ENCODE measurements at regions of chr3 and their contacts with region 1.

Region 1: GRCh38 chr3:151290673-151291072 is 12.3 kb upstream of the P2RY14 start:
- DNase-seq: peak in 1 of 2 experiments; percentile 46
- H3K4me3 ChIP-seq: no peak overlapping the region
- H3K27ac ChIP-seq: no peak overlapping the region
- H3K4me1 ChIP-seq: no peaks in the 10 kb centered on the region
- H3K27me3 ChIP-seq: no peaks in the 10 kb centered on the region
- CTCF ChIP-seq: peak; percentile 88

Region 2: GRCh38 chr3:151305101-151305750 is 14.6 kb after region 1 on chr3:
- CTCF ChIA-PET with region 1: no interaction called
- POLR2A ChIA-PET with region 1: no interaction called
- intact Hi-C with region 1: no loop called
- DNase-seq: peak; percentile 95 to 99
- H3K4me3 ChIP-seq: peak overlapping the region; percentile 51; the same call in 1 of the 2 replicates
- H3K27ac ChIP-seq: peak overlapping the region; percentile 96
- H3K4me1 ChIP-seq: peaks cover 77% of the 10 kb centered on the region
- H3K27me3 ChIP-seq: no peaks in the 10 kb centered on the region
- CTCF ChIP-seq: no peak

Region 3: DNA sequence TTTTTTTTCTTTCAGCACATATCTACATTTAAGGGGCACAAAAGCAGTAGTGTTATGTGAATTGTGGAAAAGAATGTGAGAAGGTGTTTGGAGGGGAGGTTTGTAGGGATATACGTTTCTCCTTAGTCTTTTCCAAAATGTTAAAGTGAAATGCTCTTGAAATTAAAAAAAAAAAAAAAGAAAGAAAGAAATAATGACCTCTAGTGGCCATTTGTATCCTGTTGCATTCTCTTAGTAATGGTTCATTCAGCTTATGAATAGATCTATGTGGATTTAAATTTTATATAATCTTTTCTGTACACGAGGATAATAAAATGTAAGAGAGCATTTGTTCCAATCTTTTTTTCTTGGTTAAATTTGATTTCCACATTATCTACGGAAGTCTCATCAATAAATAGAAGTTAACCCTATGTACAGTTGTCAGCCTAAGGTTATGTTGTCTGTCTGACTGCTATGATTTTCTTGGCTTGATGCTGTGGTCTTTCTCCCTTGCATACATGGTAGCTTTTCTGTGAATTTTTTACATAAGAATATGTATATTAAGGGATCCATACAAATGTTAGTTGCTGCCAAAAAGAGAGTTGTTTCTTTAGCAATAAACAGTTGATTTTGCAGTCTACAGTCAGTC is 37.0 kb after region 1 on chr3:
- CTCF ChIA-PET with region 1: interaction called, 10 read pairs
- POLR2A ChIA-PET with region 1: no interaction called
- intact Hi-C with region 1: loop called (anchors 2 kb)
- DNase-seq: no peak
- H3K4me3 ChIP-seq: no peak overlapping the region
- H3K27ac ChIP-seq: 0 out of 2 replicates have a peak overlapping the region, but pooled peaks have one; percentile 14
- H3K4me1 ChIP-seq: peaks cover 14% of the 10 kb centered on the region
- H3K27me3 ChIP-seq: no peaks in the 10 kb centered on the region
- CTCF ChIP-seq: peak; percentile 81

Region 4: DNA sequence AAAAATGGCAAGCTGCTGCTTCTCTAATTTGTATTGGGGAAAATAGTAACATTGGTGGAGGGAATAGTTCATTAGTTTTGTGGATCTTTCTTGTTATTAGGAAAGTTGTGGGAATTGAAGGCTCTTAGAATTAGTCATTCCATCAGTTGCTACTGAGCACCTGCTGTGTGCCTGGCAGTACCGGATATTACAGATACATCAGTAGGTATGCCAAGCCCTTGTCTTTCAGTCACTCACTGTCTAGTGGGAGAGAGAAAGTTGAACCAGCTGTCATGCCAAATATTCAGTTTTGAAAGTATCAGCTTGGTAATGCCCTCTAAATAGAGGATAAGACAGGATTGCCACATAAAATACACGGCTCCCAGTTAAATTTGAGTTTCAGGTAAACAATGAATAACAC is 137.7 kb after region 1 on chr3:
- CTCF ChIA-PET with region 1: no interaction called
- POLR2A ChIA-PET with region 1: no interaction called
- intact Hi-C with region 1: no loop called
- DNase-seq: no peak
- H3K4me3 ChIP-seq: no peak overlapping the region
- H3K27ac ChIP-seq: no peak overlapping the region
- H3K4me1 ChIP-seq: no peaks in the 10 kb centered on the region
- H3K27me3 ChIP-seq: no peaks in the 10 kb centered on the region
- CTCF ChIP-seq: no peak

Region 5: GRCh38 chr3:151439652-151440129 is 149.0 kb after region 1 on chr3:
- CTCF ChIA-PET with region 1: no interaction called
- POLR2A ChIA-PET with region 1: no interaction called
- intact Hi-C with region 1: loop called (anchors 2 kb)
- DNase-seq: peak; percentile 40 to 55
- H3K4me3 ChIP-seq: no peak overlapping the region
- H3K27ac ChIP-seq: no peak overlapping the region
- H3K4me1 ChIP-seq: peaks cover under 1% of the 10 kb centered on the region; the same call in 1 of the 2 replicates
- H3K27me3 ChIP-seq: no peaks in the 10 kb centered on the region
- CTCF ChIP-seq: peak; percentile 91

Region 6: GRCh38 chr3:151468284-151468917 is 177.7 kb after region 1 on chr3:
- CTCF ChIA-PET with region 1: no interaction called
- POLR2A ChIA-PET with region 1: no interaction called
- intact Hi-C with region 1: loop called (anchors 10 kb)
- DNase-seq: peak; percentile 40 to 43
- H3K4me3 ChIP-seq: no peak overlapping the region
- H3K27ac ChIP-seq: no peak overlapping the region
- H3K4me1 ChIP-seq: no peaks in the 10 kb centered on the region
- H3K27me3 ChIP-seq: no peaks in the 10 kb centered on the region
- CTCF ChIP-seq: peak; percentile 96

Region 7: DNA sequence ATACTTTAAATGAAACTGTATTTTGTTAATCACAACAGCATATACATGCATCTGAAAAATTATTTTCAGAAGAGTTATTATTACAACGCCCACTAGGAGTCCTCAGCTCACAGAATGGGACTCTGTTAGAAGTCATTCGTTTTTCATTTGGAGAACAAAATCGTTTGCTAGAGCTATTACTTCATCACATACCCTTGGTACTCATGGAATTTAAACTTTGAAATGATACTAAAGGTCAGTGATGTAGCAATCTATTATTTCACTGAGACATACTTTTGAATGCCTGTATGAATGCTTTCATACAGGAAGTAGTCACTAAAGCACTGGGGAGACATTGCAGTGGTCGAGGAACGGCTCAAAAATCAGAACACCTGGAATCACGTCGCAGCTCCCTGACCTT is 1176.1 kb after region 1 on chr3:
- CTCF ChIA-PET with region 1: no interaction called
- POLR2A ChIA-PET with region 1: no interaction called
- intact Hi-C with region 1: loop called (anchors 10 kb)
- DNase-seq: peak in 1 of 2 experiments; percentile 42
- H3K4me3 ChIP-seq: no peak overlapping the region
- H3K27ac ChIP-seq: no peak overlapping the region
- H3K4me1 ChIP-seq: no peaks in the 10 kb centered on the region
- H3K27me3 ChIP-seq: no peaks in the 10 kb centered on the region
- CTCF ChIP-seq: peak; percentile 57

Measured in PC-9 (cell line).